ENCODE measurements at regions of chr9 and their contacts with region 1.

Region 1: DNA sequence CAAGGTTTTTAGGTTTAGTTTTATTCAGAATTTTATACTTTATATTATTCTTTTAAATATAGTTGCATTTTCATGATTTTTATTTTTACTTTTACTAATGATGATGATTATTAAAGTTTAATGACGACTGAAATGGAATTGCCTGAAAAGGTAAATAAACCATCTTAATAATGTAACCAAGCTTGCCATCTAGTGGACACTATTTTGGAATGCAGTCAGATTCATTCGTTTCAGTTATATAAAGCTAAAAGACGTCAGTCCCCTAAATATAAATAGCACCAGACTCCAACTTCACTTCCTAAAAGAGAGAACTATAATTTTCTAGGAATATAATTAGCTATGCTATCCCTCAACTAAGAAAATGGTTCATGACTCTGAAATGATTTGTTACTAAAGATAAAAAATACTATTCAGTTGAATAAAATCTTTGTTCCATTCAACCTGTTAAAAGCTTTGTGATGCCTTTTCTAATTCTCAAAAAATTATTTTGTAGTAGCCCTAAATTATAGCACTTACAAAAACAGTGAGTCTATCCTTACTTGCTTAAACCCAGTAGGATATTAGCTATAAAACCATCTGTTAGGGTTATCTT is 19.9 kb downstream of the ABITRAM start:
- DNase-seq: peak in 4 of 9 donors; percentile 7 to 35 (median 29)
- ATAC-seq: peak; percentile 46
- H3K4me3 ChIP-seq: no peak overlapping the region
- H3K4me3 Mint-ChIP-seq: no peak overlapping the region
- H3K27ac ChIP-seq: no peak overlapping the region
- H3K27ac Mint-ChIP-seq: no peak overlapping the region
- H3K4me1 ChIP-seq: no peaks in the 10 kb centered on the region
- H3K4me1 Mint-ChIP-seq: no peaks in the 10 kb centered on the region
- H3K27me3 ChIP-seq: no peaks in the 10 kb centered on the region
- H3K27me3 Mint-ChIP-seq: peaks cover 0 to 3% (median 0%) of the 10 kb centered on the region in 5 donors

Region 2: DNA sequence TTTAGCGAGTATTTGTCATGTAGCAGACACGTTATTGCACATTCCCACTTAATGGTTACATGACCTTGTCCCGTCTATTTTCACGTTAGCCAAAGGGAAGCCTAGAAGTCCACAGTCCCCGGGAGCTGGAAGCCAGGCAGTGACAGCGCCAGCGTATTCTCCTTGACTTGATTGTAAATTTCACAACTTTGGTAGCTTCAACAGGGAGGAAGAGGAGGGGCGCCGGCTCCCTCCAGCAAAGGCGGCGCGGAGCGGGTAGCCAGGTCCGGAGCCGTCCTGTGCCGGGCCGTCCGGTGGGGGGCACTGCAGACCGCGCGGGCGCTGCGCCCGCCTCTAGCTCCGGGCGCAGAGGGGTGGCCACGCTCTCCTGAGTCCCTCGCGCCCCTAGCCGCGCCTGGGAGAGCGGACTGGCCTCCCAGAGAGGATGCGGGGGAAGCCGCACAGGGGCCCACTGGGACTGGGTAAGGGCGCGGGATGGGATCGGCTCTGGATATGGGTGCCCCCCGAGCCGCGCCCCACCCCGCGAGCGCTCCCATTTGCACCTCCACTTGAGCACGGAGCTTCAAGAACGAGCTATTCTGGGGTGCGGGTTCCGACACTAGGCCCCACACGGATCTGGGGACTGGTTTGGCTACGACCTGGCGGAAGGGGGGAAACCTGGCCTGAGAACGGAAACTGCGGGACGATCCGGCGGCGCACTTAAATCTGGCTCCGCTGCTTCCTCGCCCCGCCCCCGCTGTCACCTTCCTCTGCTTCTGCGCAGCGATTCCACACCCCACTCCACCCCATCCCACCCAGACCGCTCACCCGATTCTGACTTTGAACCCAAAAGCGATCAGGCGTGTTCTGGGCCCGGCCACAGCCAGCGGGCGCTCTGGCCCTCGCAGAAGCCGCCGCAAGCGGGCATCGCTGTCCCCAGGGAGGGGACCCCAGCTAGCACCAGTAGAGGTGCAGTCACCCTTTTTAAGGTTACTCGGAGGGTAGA is 1488.3 kb before region 1 on chr9:
- CTCF ChIA-PET with region 1: no interaction called
- POLR2A ChIA-PET with region 1: no interaction called
- intact Hi-C with region 1: loop called in 1 of 2 experiments (anchors 5 kb)
- DNase-seq: peak in 2 of 9 donors; percentile 28 to 33
- ATAC-seq: peak; percentile 92
- H3K4me3 ChIP-seq: no peak overlapping the region
- H3K4me3 Mint-ChIP-seq: peak overlapping the region in 9 of 10 donors; percentile 25 to 77 (median 57)
- H3K27ac ChIP-seq: no peak overlapping the region
- H3K27ac Mint-ChIP-seq: no peak overlapping the region
- H3K4me1 ChIP-seq: no peaks in the 10 kb centered on the region
- H3K4me1 Mint-ChIP-seq: peaks cover 0 to 10% (median 5%) of the 10 kb centered on the region in 7 donors
- H3K27me3 ChIP-seq: no peaks in the 10 kb centered on the region
- H3K27me3 Mint-ChIP-seq: peaks cover 37 to 58% (median 50%) of the 10 kb centered on the region in 5 donors

Region 3: GRCh38 chr9:108850293-108850897 is 103.7 kb before region 1 on chr9:
- CTCF ChIA-PET with region 1: interaction called, 3 read pairs
- POLR2A ChIA-PET with region 1: no interaction called
- intact Hi-C with region 1: loop called in 1 of 2 experiments (anchors 5 kb)
- DNase-seq: no peak
- ATAC-seq: no peak
- H3K4me3 ChIP-seq: no peak overlapping the region
- H3K4me3 Mint-ChIP-seq: no peak overlapping the region
- H3K27ac ChIP-seq: no peak overlapping the region
- H3K27ac Mint-ChIP-seq: no peak overlapping the region
- H3K4me1 ChIP-seq: no peaks in the 10 kb centered on the region
- H3K4me1 Mint-ChIP-seq: peaks cover 0 to 1% (median 0%) of the 10 kb centered on the region in 7 donors
- H3K27me3 ChIP-seq: no peaks in the 10 kb centered on the region
- H3K27me3 Mint-ChIP-seq: peaks cover 0 to 8% (median 6%) of the 10 kb centered on the region in 5 donors

Region 4: GRCh38 chr9:108885643-108886348 is 68.3 kb before region 1 on chr9:
- CTCF ChIA-PET with region 1: interaction called, 3 read pairs
- POLR2A ChIA-PET with region 1: no interaction called
- intact Hi-C with region 1: loop called in 1 of 2 experiments (anchors 1 kb)
- DNase-seq: peak in 1 of 9 donors; percentile 39
- ATAC-seq: no peak
- H3K4me3 ChIP-seq: no peak overlapping the region
- H3K4me3 Mint-ChIP-seq: no peak overlapping the region
- H3K27ac ChIP-seq: no peak overlapping the region
- H3K27ac Mint-ChIP-seq: peak overlapping the region in 1 of 9 donors; percentile 7
- H3K4me1 ChIP-seq: no peaks in the 10 kb centered on the region
- H3K4me1 Mint-ChIP-seq: peaks cover 0 to 11% (median 3%) of the 10 kb centered on the region in 7 donors
- H3K27me3 ChIP-seq: no peaks in the 10 kb centered on the region
- H3K27me3 Mint-ChIP-seq: no peaks in the 10 kb centered on the region

Region 5: DNA sequence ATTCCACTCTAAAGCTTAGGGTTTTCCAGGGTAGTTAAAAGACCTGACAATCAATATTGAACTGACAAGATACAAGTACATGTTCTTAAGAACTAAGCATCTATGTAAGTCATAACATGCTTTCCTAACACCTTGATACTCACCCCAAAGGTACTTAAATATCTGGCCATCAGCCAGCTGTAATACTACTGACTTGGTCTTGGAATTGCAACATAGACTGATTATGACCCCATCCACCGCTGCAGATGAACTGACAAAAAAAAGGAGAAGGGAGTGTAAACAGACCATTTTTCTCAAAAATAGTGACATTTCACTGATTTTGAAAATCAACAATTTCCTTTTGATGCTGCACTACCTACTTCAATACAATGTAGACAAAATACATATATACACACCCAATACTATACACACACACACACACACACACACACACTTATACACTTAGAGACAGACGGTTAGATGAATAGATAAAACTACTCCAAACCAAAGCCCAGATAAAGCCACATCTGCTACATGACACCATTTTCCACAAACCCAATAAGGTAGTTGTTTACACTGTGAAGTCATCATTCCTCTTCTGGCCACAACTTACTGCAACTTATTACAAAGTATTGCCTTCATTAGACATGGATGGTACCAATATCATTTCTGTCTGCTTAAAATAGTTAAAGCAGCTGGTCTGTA is 50.5 kb before region 1 on chr9:
- CTCF ChIA-PET with region 1: no interaction called
- POLR2A ChIA-PET with region 1: no interaction called
- intact Hi-C with region 1: loop called in 1 of 2 experiments (anchors 5 kb)
- DNase-seq: no peak
- ATAC-seq: peak; percentile 44
- H3K4me3 ChIP-seq: no peak overlapping the region
- H3K4me3 Mint-ChIP-seq: no peak overlapping the region
- H3K27ac ChIP-seq: no peak overlapping the region
- H3K27ac Mint-ChIP-seq: no peak overlapping the region
- H3K4me1 ChIP-seq: no peaks in the 10 kb centered on the region
- H3K4me1 Mint-ChIP-seq: peaks cover 0 to under 1% (median 0%) of the 10 kb centered on the region in 7 donors
- H3K27me3 ChIP-seq: no peaks in the 10 kb centered on the region
- H3K27me3 Mint-ChIP-seq: no peaks in the 10 kb centered on the region

Region 6: GRCh38 chr9:109198736-109199379 is 244.8 kb after region 1 on chr9:
- CTCF ChIA-PET with region 1: no interaction called
- POLR2A ChIA-PET with region 1: no interaction called
- intact Hi-C with region 1: loop called in 1 of 2 experiments (anchors 5 kb)
- DNase-seq: peak in 3 of 9 donors; percentile 5 to 17 (median 9)
- ATAC-seq: no peak
- H3K4me3 ChIP-seq: no peak overlapping the region
- H3K4me3 Mint-ChIP-seq: no peak overlapping the region
- H3K27ac ChIP-seq: no peak overlapping the region
- H3K27ac Mint-ChIP-seq: no peak overlapping the region
- H3K4me1 ChIP-seq: no peaks in the 10 kb centered on the region
- H3K4me1 Mint-ChIP-seq: no peaks in the 10 kb centered on the region
- H3K27me3 ChIP-seq: no peaks in the 10 kb centered on the region
- H3K27me3 Mint-ChIP-seq: peaks cover 0 to 12% (median 6%) of the 10 kb centered on the region in 5 donors

Region 7: GRCh38 chr9:110579034-110579861 is 1625.2 kb after region 1 on chr9 and contains the start of gene SVEP1:
- CTCF ChIA-PET with region 1: no interaction called
- POLR2A ChIA-PET with region 1: no interaction called
- intact Hi-C with region 1: no loop called
- DNase-seq: no peak
- ATAC-seq: no peak
- H3K4me3 ChIP-seq: no peak within 1 kb of the TSS
- H3K4me3 Mint-ChIP-seq: peak within 1 kb of the TSS in 1 of 10 donors; percentile 51
- H3K27ac ChIP-seq: no peak within 1 kb of the TSS
- H3K27ac Mint-ChIP-seq: no peak within 1 kb of the TSS
- H3K4me1 ChIP-seq: no peaks in the 10 kb centered on the region
- H3K4me1 Mint-ChIP-seq: peaks cover 0 to 4% (median 0%) of the 10 kb centered on the region in 7 donors
- H3K27me3 ChIP-seq: no peaks in the 10 kb centered on the region
- H3K27me3 Mint-ChIP-seq: peaks cover 37 to 47% (median 38%) of the 10 kb centered on the region in 5 donors
- total RNA-seq, gene SVEP1: 0.08 to 0.22 TPM in 2 of 5 experiments, not detected in the others